ENCODE measurements at regions of chr1 and their contacts with region 1.

Region 1: DNA sequence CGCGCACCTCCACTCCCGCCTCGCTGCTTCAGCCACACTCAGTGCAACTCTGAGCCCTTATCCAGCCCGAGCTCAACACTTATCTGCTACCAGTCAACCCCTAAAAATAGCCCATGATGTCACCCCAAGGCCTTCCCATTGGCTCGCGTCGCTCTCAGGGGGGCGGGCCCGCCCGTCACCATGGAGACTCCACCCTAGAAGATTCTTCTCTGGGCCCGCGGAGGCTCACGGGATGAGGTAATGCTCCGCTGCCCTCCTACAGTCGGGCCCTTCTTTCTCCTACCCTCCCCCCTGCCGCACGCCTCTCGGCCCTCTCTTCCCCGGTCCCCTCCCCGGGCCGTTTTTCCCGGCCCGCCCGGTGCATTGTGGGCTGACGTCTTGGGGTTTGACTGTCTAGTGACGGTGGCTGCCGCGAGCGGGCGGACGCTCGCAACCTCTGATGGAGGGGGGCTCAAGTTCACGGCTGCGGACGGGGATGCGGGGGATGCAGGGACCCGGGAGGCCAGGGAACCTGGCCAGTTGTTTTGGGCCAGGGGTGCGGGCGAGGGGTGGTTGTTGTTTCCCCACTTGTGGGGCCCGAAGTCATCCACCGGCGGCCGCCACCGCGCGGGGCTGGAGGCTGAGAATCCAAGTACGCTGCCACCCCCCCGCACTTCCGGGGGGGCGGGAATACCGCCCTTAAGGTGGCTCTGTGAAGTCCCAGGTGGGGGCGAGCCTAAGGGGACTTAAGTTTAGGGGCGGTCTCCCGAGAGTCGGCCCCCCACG is at the start of gene JUN:
- DNase-seq: peak; percentile 97 to 100 (median 99)
- ATAC-seq: peak; percentile 72
- H3K4me3 ChIP-seq: peak within 1 kb of the TSS; percentile 91 to 99
- H3K4me3 Mint-ChIP-seq: peak within 1 kb of the TSS; percentile 92
- H3K27ac ChIP-seq: peak within 1 kb of the TSS; percentile 100
- H3K27ac Mint-ChIP-seq: peak within 1 kb of the TSS; percentile 97
- H3K4me1 ChIP-seq: peaks cover 4% of the 10 kb centered on the region
- H3K4me1 Mint-ChIP-seq: peaks cover 32% of the 10 kb centered on the region
- H3K27me3 ChIP-seq: no peaks in the 10 kb centered on the region
- H3K27me3 Mint-ChIP-seq: no peaks in the 10 kb centered on the region
- CTCF ChIP-seq: no peak
- total RNA-seq, gene JUN: 595 to 598 TPM

Region 2: DNA sequence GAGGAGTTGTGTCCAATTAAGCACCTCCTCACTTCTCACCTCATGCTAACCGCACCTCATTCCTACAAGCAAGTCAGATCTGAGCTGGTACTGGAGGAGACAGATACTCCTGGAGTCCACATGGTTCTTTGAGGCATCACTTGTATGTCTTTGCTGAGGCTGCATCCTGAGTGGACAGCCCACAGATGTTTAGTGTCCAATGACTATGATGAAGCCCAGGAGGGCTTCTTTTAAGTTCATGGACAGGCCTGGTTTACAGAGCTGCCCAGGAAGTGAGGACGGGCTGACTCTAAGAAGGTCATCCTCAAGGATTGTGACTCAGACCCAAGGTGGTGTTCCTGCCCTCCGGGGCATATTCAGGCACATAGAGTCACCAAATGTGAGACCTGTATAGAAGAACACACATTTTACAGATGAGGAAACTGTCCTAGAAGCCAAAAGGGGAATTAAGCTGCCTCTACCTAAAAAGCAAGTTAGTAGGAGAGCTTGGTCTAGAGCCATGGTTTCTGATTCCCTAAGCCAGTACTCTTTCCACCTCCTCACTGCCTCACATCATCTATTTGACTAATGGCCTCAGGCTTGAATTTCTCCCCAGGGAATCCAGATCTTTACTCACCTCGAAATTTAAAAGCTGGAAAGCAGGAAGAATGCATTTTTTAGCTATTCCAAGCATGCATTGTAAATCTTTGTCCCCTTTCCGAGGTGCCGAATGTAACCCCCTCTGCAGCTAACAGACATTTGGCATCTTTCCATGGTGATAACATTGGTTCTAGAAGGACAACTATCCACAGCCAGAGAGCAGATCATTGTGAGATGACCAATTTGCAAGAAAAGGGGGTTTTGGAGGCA is 465.8 kb before region 1 on chr1:
- CTCF ChIA-PET with region 1: no interaction called
- POLR2A ChIA-PET with region 1: no interaction called
- intact Hi-C with region 1: no loop called
- DNase-seq: no peak
- ATAC-seq: no peak
- H3K4me3 ChIP-seq: no peak overlapping the region
- H3K4me3 Mint-ChIP-seq: no peak overlapping the region
- H3K27ac ChIP-seq: no peak overlapping the region
- H3K27ac Mint-ChIP-seq: no peak overlapping the region
- H3K4me1 ChIP-seq: no peaks in the 10 kb centered on the region
- H3K4me1 Mint-ChIP-seq: no peaks in the 10 kb centered on the region
- H3K27me3 ChIP-seq: no peaks in the 10 kb centered on the region
- H3K27me3 Mint-ChIP-seq: no peaks in the 10 kb centered on the region
- CTCF ChIP-seq: no peak

Region 3: GRCh38 chr1:58755468-58755872 is 28.7 kb before region 1 on chr1:
- CTCF ChIA-PET with region 1: interaction called, 7 read pairs
- POLR2A ChIA-PET with region 1: interaction called, 13 read pairs
- intact Hi-C with region 1: no loop called
- DNase-seq: peak in 8 of 9 experiments; percentile 17 to 84 (median 60)
- ATAC-seq: peak; percentile 78
- H3K4me3 ChIP-seq: peak overlapping the region in 1 of 2 experiments; percentile 4
- H3K4me3 Mint-ChIP-seq: peak overlapping the region; percentile 68
- H3K27ac ChIP-seq: peak overlapping the region in 1 of 2 experiments; percentile 66
- H3K27ac Mint-ChIP-seq: peak overlapping the region; percentile 81
- H3K4me1 ChIP-seq: peaks cover 37% of the 10 kb centered on the region
- H3K4me1 Mint-ChIP-seq: peaks cover 38% of the 10 kb centered on the region
- H3K27me3 ChIP-seq: no peaks in the 10 kb centered on the region
- H3K27me3 Mint-ChIP-seq: no peaks in the 10 kb centered on the region
- CTCF ChIP-seq: no peak

Region 4: DNA sequence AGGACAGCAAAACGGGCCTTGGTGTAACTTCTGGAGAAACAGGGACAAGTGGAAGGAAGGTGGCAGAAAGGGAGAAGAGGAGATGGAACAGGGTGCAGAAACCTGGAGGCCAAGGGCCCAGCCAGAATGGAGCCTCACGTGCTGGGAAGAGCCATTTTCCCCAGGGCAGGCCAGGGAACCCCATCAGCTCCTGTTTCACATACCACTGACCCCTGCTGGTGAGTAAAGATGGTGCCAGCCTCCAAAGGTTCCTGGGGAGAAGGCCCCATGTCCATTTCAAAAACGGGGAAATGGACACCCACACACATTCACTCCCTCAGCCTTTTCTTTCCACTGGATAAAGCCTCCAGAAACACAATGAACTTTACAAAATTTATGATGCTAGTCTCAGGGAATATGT is 57.3 kb after region 1 on chr1:
- CTCF ChIA-PET with region 1: interaction called, 3 read pairs
- POLR2A ChIA-PET with region 1: no interaction called
- intact Hi-C with region 1: loop called in 1 of 2 experiments (anchors 1 kb)
- DNase-seq: peak in 2 of 9 experiments; percentile 43 to 57
- ATAC-seq: no peak
- H3K4me3 ChIP-seq: no peak overlapping the region
- H3K4me3 Mint-ChIP-seq: no peak overlapping the region
- H3K27ac ChIP-seq: no peak overlapping the region
- H3K27ac Mint-ChIP-seq: peak overlapping the region; percentile 49
- H3K4me1 ChIP-seq: no peaks in the 10 kb centered on the region
- H3K4me1 Mint-ChIP-seq: peaks cover 6% of the 10 kb centered on the region
- H3K27me3 ChIP-seq: no peaks in the 10 kb centered on the region
- H3K27me3 Mint-ChIP-seq: no peaks in the 10 kb centered on the region
- CTCF ChIP-seq: peak; percentile 22

Region 5: DNA sequence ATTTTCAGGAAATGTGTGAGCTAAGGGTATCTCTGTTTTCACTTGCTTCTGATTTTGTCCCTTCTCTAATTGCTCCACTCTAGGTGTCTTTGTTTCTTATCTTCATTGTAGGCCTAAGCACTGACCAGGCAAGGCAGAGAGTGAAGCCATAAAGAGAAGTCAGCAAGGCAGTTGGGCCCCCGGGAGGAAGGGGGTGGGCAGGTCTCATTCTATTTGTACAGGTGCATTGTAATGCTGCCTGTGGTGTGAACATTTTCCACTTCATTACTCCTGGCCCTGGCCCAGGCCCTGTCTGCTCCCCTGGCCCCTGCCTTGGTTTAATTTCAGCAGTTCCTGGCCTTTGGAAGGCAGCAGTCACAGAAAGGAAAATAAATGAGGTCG is 86.1 kb after region 1 on chr1:
- CTCF ChIA-PET with region 1: no interaction called
- POLR2A ChIA-PET with region 1: no interaction called
- intact Hi-C with region 1: no loop called
- DNase-seq: no peak
- ATAC-seq: no peak
- H3K4me3 ChIP-seq: no peak overlapping the region
- H3K4me3 Mint-ChIP-seq: no peak overlapping the region
- H3K27ac ChIP-seq: no peak overlapping the region
- H3K27ac Mint-ChIP-seq: no peak overlapping the region
- H3K4me1 ChIP-seq: no peaks in the 10 kb centered on the region
- H3K4me1 Mint-ChIP-seq: no peaks in the 10 kb centered on the region
- H3K27me3 ChIP-seq: no peaks in the 10 kb centered on the region
- H3K27me3 Mint-ChIP-seq: no peaks in the 10 kb centered on the region
- CTCF ChIP-seq: no peak

Region 6: GRCh38 chr1:58941471-58942289 is 157.5 kb after region 1 on chr1:
- CTCF ChIA-PET with region 1: interaction called, 4 read pairs
- POLR2A ChIA-PET with region 1: interaction called, 10 read pairs
- intact Hi-C with region 1: loop called in 1 of 2 experiments (anchors 2 kb)
- DNase-seq: peak in 7 of 9 experiments; percentile 13 to 79 (median 44)
- ATAC-seq: peak; percentile 71
- H3K4me3 ChIP-seq: peak overlapping the region; percentile 15 to 36
- H3K4me3 Mint-ChIP-seq: peak overlapping the region; percentile 73
- H3K27ac ChIP-seq: peak overlapping the region in 1 of 2 experiments; percentile 28
- H3K27ac Mint-ChIP-seq: peak overlapping the region; percentile 82
- H3K4me1 ChIP-seq: peaks cover 64% of the 10 kb centered on the region
- H3K4me1 Mint-ChIP-seq: peaks cover 81% of the 10 kb centered on the region
- H3K27me3 ChIP-seq: no peaks in the 10 kb centered on the region
- H3K27me3 Mint-ChIP-seq: no peaks in the 10 kb centered on the region
- CTCF ChIP-seq: no peak

Region 7: GRCh38 chr1:59071289-59071688 is 287.1 kb after region 1 on chr1:
- CTCF ChIA-PET with region 1: interaction called, 6 read pairs
- POLR2A ChIA-PET with region 1: interaction called, 5 read pairs
- intact Hi-C with region 1: loop called in 1 of 2 experiments (anchors 2 kb)
- DNase-seq: peak in 5 of 9 experiments; percentile 18 to 61 (median 27)
- ATAC-seq: peak; percentile 70
- H3K4me3 ChIP-seq: no peak overlapping the region
- H3K4me3 Mint-ChIP-seq: peak overlapping the region; percentile 68
- H3K27ac ChIP-seq: peak overlapping the region in 1 of 2 experiments; percentile 40
- H3K27ac Mint-ChIP-seq: peak overlapping the region; percentile 92
- H3K4me1 ChIP-seq: peaks cover 27% of the 10 kb centered on the region
- H3K4me1 Mint-ChIP-seq: peaks cover 28% of the 10 kb centered on the region
- H3K27me3 ChIP-seq: no peaks in the 10 kb centered on the region
- H3K27me3 Mint-ChIP-seq: no peaks in the 10 kb centered on the region
- CTCF ChIP-seq: no peak

Region 8: GRCh38 chr1:59188413-59189213 is 404.4 kb after region 1 on chr1:
- CTCF ChIA-PET with region 1: no interaction called
- POLR2A ChIA-PET with region 1: no interaction called
- intact Hi-C with region 1: no loop called
- DNase-seq: no peak
- ATAC-seq: no peak
- H3K4me3 ChIP-seq: no peak overlapping the region
- H3K4me3 Mint-ChIP-seq: no peak overlapping the region
- H3K27ac ChIP-seq: no peak overlapping the region
- H3K27ac Mint-ChIP-seq: no peak overlapping the region
- H3K4me1 ChIP-seq: no peaks in the 10 kb centered on the region
- H3K4me1 Mint-ChIP-seq: no peaks in the 10 kb centered on the region
- H3K27me3 ChIP-seq: no peaks in the 10 kb centered on the region
- H3K27me3 Mint-ChIP-seq: no peaks in the 10 kb centered on the region
- CTCF ChIP-seq: no peak

Region 9: DNA sequence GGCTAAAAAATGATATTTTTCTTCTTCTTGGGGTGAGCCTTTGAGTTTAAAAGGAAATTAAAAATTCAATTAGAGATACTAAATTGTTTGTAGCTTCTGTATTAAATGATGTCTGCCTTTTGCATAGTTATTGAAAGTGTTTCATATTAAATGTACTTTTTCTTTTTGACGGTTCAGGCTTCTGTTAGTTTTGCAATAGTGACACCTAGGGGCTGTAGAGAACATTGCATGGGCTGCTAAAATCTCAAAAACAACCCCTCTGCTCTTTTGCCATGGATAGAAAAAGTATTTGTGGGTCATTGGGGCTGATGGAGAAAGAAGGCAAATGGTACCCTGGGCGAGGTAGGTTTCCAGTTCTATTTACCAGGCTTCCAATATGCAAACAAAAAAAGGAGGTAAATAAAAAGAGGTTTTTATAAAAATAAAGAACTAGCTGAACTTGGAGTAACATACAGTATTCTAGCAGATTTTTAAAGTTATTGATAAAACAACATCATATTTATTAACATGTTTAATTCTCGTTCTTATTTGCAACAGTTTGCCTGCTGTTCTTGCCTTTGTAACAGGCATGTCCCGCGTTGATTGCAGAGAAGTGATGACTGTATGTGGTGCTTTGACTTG is 915.2 kb after region 1 on chr1:
- CTCF ChIA-PET with region 1: interaction called, 30 read pairs
- POLR2A ChIA-PET with region 1: interaction called, 9 read pairs
- intact Hi-C with region 1: loop called in 1 of 2 experiments (anchors 1 kb)
- DNase-seq: peak in 4 of 9 experiments; percentile 20 to 70 (median 44)
- ATAC-seq: peak; percentile 55
- H3K4me3 ChIP-seq: no peak overlapping the region
- H3K4me3 Mint-ChIP-seq: no peak overlapping the region
- H3K27ac ChIP-seq: no peak overlapping the region
- H3K27ac Mint-ChIP-seq: no peak overlapping the region
- H3K4me1 ChIP-seq: peaks cover 13% of the 10 kb centered on the region
- H3K4me1 Mint-ChIP-seq: peaks cover 19% of the 10 kb centered on the region
- H3K27me3 ChIP-seq: no peaks in the 10 kb centered on the region
- H3K27me3 Mint-ChIP-seq: no peaks in the 10 kb centered on the region
- CTCF ChIP-seq: peak; percentile 99

Measured in CD8-positive, alpha-beta T cell (primary cell).